ENCODE measurements at regions of chr15 and their contacts with region 1.

Region 1: GRCh38 chr15:60916679-60917460 is 312.2 kb downstream of the RORA start:
- DNase-seq: no peak
- H3K4me3 ChIP-seq: peak overlapping the region in 1 of 4 donors; percentile 21
- H3K27ac ChIP-seq: peak overlapping the region; percentile 73 to 85 (median 82)
- H3K4me1 ChIP-seq: peaks cover 23 to 60% (median 32%) of the 10 kb centered on the region in 3 donors
- H3K27me3 ChIP-seq: no peaks in the 10 kb centered on the region
- CTCF ChIP-seq: peak; percentile 75 to 89 (median 88)
- POLR2A ChIP-seq: no peak

Region 2: GRCh38 chr15:60592371-60593169 is 324.3 kb before region 1 on chr15:
- intact Hi-C with region 1: loop called (anchors 5 kb)
- DNase-seq: peak; percentile 24
- H3K4me3 ChIP-seq: peak overlapping the region; percentile 72 to 95 (median 84)
- H3K27ac ChIP-seq: peak overlapping the region; percentile 89 to 98 (median 96)
- H3K4me1 ChIP-seq: peaks cover 3 to 40% (median 4%) of the 10 kb centered on the region in 3 donors
- H3K27me3 ChIP-seq: no peaks in the 10 kb centered on the region
- CTCF ChIP-seq: peak in 5 of 6 experiments; percentile 3 to 41 (median 10)
- POLR2A ChIP-seq: peak in 3 of 4 donors; percentile 80 to 89 (median 82)

Region 3: DNA sequence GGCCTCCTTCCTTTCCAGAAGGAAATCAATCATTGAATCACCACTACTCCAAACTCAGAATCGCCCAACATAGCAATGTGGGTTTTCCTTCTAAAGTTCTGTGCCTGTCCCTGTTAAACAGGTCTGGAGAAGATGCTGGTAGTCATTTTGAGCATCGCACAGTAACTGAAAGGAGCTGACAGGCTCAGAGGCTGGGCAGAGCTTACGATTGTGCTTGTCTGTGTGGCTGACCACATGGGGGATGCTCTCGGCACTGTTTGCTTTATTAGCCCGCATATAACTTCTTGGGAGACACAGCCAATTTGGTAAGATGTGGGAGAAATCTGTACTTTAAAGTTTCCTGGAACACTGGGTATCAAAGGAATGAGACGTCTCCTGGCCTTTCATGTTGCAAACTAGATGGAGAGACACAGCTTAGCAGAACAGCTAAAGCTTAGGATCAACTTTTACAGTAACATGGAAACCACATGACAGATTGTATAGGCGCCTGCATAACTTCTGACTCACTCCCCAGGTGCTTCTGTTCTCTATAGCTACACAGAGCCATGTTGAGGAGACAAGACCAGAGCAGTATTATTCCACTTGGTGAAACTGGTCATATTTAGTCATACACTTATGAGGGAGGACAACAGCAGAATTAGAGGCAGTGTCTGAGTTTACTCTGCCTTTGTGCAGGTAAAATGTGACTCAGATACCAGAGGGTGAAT is 61.9 kb before region 1 on chr15:
- intact Hi-C with region 1: no loop called
- DNase-seq: no peak
- H3K4me3 ChIP-seq: no peak overlapping the region
- H3K27ac ChIP-seq: no peak overlapping the region
- H3K4me1 ChIP-seq: peaks cover 0 to 4% (median 0%) of the 10 kb centered on the region in 3 donors
- H3K27me3 ChIP-seq: no peaks in the 10 kb centered on the region
- CTCF ChIP-seq: no peak
- POLR2A ChIP-seq: no peak

Measured in esophagus squamous epithelium (tissue), 5 donors.